ENCODE measurements at regions of chr1 and their contacts with region 1.

Region 1: GRCh38 chr1:200925831-200926230 is 31.1 kb downstream of the INAVA start:
- DNase-seq: peak; percentile 32
- H3K4me3 Mint-ChIP-seq: no peak overlapping the region
- H3K27ac Mint-ChIP-seq: no peak overlapping the region
- H3K4me1 Mint-ChIP-seq: peaks cover 2% of the 10 kb centered on the region
- H3K27me3 Mint-ChIP-seq: peaks cover 5% of the 10 kb centered on the region

Region 2: GRCh38 chr1:200161817-200162216 is 764.0 kb before region 1 on chr1:
- CTCF ChIA-PET with region 1: no interaction called
- intact Hi-C with region 1: no loop called
- DNase-seq: no peak
- H3K4me3 Mint-ChIP-seq: no peak overlapping the region
- H3K27ac Mint-ChIP-seq: no peak overlapping the region
- H3K4me1 Mint-ChIP-seq: no peaks in the 10 kb centered on the region
- H3K27me3 Mint-ChIP-seq: no peaks in the 10 kb centered on the region

Region 3: DNA sequence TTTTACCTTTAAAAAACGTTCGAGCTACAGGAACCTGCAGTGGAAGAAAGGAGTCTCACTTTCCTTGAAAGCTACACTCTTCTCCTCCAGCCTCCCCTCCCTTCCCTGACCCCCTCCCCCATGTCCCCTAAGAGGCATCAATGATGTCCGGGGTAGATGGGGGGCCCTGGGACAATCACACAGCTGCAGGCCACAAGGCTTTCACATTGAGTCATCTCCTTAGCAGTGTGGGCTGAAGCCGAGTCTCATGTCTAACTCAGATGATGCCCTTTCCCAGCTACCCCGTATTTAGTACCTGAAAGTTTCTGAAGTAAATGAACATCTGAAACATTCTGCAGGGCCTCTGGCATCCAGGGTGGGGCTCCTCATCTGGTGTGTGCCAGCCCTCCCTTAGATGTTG is 59.3 kb before region 1 on chr1:
- CTCF ChIA-PET with region 1: no interaction called
- intact Hi-C with region 1: loop called (anchors 1 kb)
- DNase-seq: peak; percentile 71
- H3K4me3 Mint-ChIP-seq: no peak overlapping the region
- H3K27ac Mint-ChIP-seq: no peak overlapping the region
- H3K4me1 Mint-ChIP-seq: peaks cover 40% of the 10 kb centered on the region
- H3K27me3 Mint-ChIP-seq: peaks cover 12% of the 10 kb centered on the region

Region 4: DNA sequence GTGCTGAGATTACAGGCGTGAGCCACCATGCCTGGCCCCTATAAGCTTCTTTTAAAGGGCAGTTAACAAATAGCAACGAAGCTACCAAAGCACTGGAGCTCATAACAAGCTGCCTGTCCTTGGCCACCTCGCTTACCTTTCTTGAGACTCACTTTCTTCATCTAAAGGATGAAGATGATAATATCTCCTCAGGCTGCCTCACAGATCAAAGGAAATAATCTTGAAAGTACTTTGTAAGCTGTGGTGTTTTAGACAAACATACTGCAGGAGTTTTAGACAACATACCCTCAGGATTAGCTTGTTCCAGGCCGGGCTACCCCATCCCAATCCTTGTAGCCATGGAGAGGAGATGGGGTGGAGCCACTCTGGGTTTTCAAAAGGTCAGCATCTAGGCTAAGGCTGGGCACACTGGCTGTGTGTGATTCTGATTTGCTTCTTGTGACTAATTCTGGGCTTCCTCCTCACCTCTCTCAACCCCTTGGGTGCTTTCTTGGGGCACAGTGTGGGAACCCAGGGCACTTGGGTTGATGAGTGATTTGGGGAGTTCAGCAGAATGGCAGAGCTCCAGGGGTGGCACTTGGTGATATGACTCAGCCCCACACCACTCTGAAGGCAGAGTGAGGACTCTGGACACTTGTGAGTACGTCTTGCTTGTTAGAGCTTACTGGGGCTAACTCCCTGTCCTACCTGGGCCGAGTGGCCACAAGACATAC is 47.8 kb before region 1 on chr1:
- CTCF ChIA-PET with region 1: no interaction called
- intact Hi-C with region 1: loop called (anchors 1 kb)
- DNase-seq: peak; percentile 76
- H3K4me3 Mint-ChIP-seq: no peak overlapping the region
- H3K27ac Mint-ChIP-seq: no peak overlapping the region
- H3K4me1 Mint-ChIP-seq: peaks cover 22% of the 10 kb centered on the region
- H3K27me3 Mint-ChIP-seq: peaks cover 24% of the 10 kb centered on the region

Region 5: DNA sequence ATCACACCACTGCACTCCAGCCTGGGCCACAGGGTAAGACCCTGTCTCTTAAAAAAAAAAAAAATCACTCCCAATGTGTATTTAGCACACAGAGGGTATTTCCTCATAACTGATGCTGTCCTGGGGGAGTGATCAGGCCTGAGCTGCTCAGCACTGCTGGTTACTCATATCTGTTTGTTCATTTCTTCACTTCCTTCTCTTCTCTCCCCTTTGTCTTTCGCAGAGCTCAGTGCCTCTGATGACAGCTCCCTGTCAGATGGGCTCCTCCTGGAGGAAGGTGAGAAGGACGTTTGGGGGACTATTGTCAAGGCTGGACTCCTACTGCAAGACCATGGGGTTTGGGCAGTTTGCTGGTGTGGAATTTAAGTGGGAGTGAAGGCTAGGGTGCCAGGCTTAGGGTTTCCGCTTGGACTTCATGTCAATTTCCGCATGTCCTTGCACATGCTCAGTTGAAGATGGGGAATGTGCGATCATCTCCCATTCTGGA is 18.2 kb before region 1 on chr1:
- CTCF ChIA-PET with region 1: interaction called, 3 read pairs
- intact Hi-C with region 1: loop called (anchors 1 kb)
- DNase-seq: no peak
- H3K4me3 Mint-ChIP-seq: no peak overlapping the region
- H3K27ac Mint-ChIP-seq: no peak overlapping the region
- H3K4me1 Mint-ChIP-seq: peaks cover 12% of the 10 kb centered on the region
- H3K27me3 Mint-ChIP-seq: peaks cover 2% of the 10 kb centered on the region

Region 6: DNA sequence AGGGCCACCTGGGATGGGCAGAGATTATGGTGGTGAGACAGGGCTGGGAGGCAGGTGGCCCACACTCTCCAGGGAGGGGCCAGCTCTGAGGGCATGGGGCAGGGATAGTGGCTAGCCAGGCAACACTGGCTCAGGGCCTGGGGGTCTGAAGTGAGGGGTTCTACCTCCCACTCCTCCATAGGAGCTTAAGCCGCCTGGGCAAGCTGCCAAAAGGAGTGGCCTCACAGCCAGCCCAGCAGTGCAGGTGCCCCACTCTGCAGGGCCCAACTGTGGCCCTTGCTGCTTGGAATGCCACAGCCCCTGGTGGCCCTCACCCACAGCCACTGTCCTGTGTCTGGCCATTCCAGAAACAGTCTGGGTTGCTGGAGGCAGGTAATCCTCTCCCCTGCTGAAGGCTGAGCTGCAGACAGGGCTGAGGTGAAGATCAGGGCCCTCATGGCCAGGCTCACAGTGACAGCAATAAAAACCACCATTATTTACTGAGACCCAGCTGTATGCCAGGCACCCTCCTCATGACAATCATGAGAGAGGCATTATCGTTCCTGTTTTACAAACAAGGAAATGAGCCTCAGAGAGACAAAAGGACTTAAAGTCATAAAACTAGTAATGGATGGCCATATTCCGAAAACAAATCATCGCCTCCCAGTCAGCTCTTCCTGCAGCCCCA is 66.7 kb after region 1 on chr1:
- CTCF ChIA-PET with region 1: no interaction called
- intact Hi-C with region 1: no loop called
- DNase-seq: no peak
- H3K4me3 Mint-ChIP-seq: no peak overlapping the region
- H3K27ac Mint-ChIP-seq: no peak overlapping the region
- H3K4me1 Mint-ChIP-seq: no peaks in the 10 kb centered on the region
- H3K27me3 Mint-ChIP-seq: no peaks in the 10 kb centered on the region

Region 7: DNA sequence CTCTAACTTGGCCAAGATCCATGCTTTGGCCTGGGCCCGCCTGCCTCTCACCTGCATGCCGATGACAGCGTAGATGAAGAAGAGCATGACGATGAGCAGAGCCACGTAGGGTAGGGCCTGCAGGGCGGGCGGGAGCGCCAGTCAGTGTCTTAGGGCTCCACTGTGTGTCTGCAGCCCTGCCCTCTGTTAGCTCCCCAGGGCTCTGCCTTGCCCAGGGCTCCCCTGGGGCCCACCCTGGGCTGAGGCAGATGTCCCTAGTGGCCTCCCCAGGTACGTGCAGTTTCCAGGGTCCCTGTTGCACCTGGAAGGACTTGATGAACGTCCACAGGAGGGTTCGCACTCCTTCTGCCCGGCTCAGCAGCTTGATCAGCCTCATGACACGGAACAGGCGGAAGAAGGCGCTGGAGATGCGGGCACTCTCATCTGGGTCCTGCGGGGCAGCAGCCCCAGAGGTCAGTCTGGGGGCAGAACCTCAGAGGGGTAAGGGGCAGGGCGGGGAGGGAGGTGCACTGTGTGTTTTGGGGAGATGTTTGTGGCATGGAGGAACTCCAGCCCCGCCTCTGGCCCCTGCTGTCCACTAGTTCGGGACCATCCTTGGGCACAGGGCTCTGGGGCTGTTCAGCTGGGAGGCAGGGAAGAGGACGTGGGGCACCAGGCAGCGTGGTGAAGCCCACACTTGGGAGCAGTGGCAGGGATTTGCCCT is 127.5 kb after region 1 on chr1:
- CTCF ChIA-PET with region 1: no interaction called
- intact Hi-C with region 1: loop called (anchors 1 kb)
- DNase-seq: no peak
- H3K4me3 Mint-ChIP-seq: no peak overlapping the region
- H3K27ac Mint-ChIP-seq: no peak overlapping the region
- H3K4me1 Mint-ChIP-seq: peaks cover 13% of the 10 kb centered on the region
- H3K27me3 Mint-ChIP-seq: no peaks in the 10 kb centered on the region

Region 8: GRCh38 chr1:201214461-201214860 is 288.6 kb after region 1 on chr1:
- CTCF ChIA-PET with region 1: no interaction called
- intact Hi-C with region 1: no loop called
- DNase-seq: peak; percentile 12
- H3K4me3 Mint-ChIP-seq: no peak overlapping the region
- H3K27ac Mint-ChIP-seq: no peak overlapping the region
- H3K4me1 Mint-ChIP-seq: no peaks in the 10 kb centered on the region
- H3K27me3 Mint-ChIP-seq: peaks cover 14% of the 10 kb centered on the region

Measured in activated naive CD4-positive, alpha-beta T cell treated with anti-CD3 and anti-CD28 coated beads for 36 hours (primary cell).